Left colon (tissue), 2 donors: ENCODE measurements at regions of chr6 and their contacts with region 1.

Region 1: DNA sequence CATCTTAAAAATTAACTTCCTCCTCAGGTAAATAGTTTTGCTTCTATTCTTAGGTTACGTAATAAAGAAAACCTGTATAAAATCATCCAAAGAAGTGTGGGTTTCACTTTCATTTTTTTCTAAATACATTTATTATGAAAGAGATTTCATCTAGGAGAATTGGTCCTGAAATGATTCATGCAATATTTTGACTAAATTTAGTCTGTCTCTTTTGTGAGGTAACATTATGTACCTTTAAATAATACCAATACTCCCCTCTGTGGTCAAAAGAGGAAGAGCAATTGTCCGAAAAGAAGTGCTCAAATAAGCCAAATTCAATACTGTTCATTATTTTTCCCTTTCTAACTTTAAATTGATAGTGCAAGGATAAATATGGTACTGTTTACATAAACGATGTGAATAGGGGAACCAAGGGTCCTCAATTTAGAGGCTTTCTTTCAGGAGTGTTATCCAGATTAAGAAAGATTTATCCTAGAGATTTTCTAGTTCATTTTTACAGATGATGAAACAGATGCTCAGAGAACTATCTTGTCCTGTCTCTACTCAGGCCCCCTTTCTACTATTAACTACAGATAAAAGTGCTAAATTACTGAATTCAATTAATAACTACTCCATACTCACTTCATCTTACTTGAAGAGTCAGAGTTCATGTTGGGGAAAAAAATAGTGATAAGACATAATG is 26.2 kb downstream of the CYP39A1 start:
- DNase-seq: no peak
- ATAC-seq: peak; percentile 46

Region 2: DNA sequence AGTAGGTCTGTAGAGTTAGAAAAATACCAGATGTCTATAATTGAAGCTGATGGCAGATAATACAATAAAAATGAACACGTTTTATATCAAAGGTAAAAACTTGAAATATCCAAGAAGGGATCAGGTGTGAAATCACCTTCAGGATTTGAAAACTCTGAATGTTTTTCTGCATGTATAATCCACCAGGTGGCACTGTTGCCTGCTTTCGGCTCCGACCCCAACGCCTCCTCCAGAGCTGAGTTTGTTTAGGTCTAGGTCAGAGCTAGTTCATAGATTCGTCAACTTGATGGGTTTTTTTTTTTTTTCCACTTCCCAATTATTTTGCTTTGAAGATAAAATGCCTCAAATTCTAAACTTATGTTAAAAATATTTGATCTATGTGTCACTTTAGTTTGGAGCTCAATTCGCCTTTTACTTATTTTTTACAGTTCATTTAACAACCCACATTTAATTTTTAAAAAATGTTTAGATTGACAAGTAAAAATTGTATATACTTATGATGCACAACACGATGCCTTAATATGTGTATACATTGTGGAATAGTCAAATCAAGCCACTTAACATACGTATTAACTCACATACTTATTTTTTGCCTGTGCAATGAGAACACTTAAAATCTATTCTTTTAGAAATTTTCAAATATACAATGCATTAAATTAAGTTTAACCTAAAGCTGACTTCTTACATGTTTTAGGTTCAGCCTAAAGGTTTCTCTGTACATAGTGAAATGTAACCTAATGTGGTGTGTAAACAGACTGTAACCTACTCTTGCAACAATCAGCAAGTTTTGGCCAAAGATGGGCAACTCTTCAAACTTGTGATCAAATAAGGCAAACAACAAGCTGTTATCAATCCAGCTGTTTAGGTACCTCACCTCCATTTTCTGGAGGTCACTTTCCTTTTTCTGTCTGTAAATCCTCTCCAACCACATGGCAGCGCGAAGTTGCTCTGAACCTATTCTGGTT is 536.0 kb before region 1 on chr6:
- intact Hi-C with region 1: loop called in 1 of 2 experiments (anchors 10 kb)
- DNase-seq: peak; percentile 47 to 61
- ATAC-seq: peak; percentile 81

Region 3: DNA sequence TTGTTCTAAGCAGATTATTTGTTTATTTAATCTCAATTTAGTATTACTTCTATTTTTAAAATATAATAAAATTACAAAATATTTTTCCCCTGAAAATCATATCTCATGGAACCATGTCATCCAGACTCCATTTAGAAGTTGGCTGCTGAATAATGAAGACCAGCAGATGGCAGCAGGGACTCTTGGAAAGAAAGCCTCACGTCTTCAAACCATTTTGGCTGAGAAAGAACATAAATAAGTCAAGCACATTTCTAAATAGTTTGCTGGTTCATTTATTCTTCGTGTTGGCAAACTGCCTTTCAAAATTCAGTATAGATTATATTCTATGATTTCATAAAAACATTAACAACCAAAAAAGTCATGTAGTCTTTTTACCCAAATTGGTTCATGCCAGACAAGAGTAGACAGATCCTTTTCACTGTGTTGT is 206.8 kb before region 1 on chr6:
- intact Hi-C with region 1: loop called in 1 of 2 experiments (anchors 5 kb)
- DNase-seq: peak in 1 of 2 donors; percentile 68
- ATAC-seq: peak; percentile 61

Region 4: GRCh38 chr6:46720401-46720800 is 94.0 kb after region 1 on chr6:
- intact Hi-C with region 1: no loop called
- DNase-seq: no peak
- ATAC-seq: no peak

Region 5: GRCh38 chr6:46867411-46867810 is 241.0 kb after region 1 on chr6:
- intact Hi-C with region 1: no loop called
- DNase-seq: no peak
- ATAC-seq: no peak